Activated CD4-positive, alpha-beta T cell treated with anti-CD3 and anti-CD28 coated beads for 36 hours (primary cell): ENCODE measurements at regions of chr16 and their contacts with region 1.

Region 1: GRCh38 chr16:5033256-5034169 is at the start of gene NAGPA:
- DNase-seq: peak; percentile 93
- ATAC-seq: peak; percentile 96
- H3K4me3 Mint-ChIP-seq: peak within 1 kb of the TSS; percentile 85
- H3K27ac Mint-ChIP-seq: peak within 1 kb of the TSS; percentile 80
- H3K4me1 Mint-ChIP-seq: peaks cover 19% of the 10 kb centered on the region
- H3K27me3 Mint-ChIP-seq: no peaks in the 10 kb centered on the region
- total RNA-seq, gene NAGPA: 8.9 to 10.2 TPM

Region 2: DNA sequence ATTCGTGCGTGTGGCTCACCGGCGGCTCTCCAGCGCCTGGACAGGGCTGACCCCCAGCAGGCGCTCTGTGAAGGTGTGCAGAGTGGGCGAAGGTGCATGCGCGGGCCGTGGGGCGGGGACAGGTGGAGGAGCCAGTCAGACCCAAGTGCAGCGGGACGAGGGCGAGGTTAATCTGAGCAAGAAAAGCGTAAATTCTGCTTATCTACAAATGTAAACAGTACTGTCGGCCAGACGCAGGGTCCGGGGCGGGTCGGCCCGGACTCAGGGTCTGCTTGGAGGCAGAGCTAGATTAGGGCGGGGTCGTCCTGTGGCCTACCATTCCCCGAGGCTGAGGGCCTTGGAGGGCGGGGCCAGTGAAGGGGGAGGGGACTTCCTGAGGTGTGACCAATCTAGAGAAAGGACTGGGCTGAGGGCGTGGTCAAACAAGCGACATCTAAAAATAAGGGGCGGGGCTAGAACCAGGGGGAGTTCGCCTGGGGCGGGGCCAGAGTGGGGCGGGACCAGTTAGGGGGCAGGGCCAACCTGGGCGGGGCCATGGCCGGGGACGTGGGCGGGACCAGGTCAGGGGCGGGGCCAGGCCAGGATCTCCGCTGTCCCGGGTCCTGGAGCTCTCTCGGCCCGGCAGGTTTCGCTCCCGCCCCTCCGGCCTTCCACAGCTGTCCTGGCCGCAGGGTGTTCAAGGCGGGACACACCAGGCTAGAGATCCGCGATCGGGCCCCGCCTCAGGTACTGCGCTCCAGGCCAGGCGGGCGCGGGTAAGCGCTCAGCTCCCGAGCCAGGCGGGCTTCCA is 75.6 kb before region 1 on chr16 and contains the start of gene SEC14L5:
- CTCF ChIA-PET with region 1: interaction called, 3 read pairs
- POLR2A ChIA-PET with region 1: no interaction called
- intact Hi-C with region 1: loop called in 1 of 2 experiments (anchors 1 kb)
- DNase-seq: peak; percentile 98
- ATAC-seq: peak; percentile 95
- H3K4me3 Mint-ChIP-seq: peak within 1 kb of the TSS; percentile 75
- H3K27ac Mint-ChIP-seq: peak within 1 kb of the TSS; percentile 1
- H3K4me1 Mint-ChIP-seq: peaks cover 12% of the 10 kb centered on the region
- H3K27me3 Mint-ChIP-seq: peaks cover 33% of the 10 kb centered on the region
- total RNA-seq, gene SEC14L5: 0.09 to 0.28 TPM

Region 3: DNA sequence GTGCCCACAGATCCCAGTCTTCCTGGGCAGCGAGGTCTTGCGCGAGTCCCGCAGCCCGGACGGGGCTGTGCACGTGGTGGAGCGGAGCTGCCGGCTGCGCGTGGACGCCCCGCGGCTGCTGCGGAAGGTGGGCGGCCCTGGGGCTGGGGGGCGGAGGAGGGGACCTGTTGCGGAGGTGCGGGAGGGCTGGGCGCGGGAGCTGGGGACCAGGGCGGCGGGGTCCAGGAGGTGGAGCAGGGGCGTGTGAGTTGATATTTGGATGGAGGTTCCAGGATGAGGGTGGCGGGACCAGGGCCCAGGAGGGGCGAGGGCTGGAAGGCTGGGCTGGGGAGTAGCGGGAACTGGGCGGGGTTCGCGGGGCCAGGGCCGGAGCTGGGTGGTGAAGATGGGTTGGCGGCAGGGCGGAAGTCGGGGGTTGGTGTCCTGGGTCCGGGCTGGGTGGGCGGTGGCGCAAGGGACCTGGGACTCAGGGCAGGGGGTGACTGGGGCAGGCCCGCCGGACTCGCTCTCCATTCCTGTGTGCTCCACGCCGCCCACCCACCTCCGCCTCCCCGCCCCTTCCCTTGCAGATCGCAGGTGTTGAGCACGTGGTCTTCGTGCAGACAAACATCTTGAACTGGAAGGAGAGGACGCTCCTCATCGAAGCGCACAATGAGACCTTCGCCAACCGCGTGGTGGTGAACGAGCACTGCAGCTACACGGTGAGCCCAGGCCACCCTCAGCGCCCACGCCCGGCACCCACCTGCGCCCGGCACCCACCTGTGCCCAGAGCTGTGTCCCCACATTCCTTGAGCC is 45.7 kb before region 1 on chr16:
- CTCF ChIA-PET with region 1: no interaction called
- POLR2A ChIA-PET with region 1: no interaction called
- intact Hi-C with region 1: no loop called
- DNase-seq: peak; percentile 9
- ATAC-seq: no peak
- H3K4me3 Mint-ChIP-seq: no peak overlapping the region
- H3K27ac Mint-ChIP-seq: no peak overlapping the region
- H3K4me1 Mint-ChIP-seq: peaks cover 2% of the 10 kb centered on the region
- H3K27me3 Mint-ChIP-seq: peaks cover 38% of the 10 kb centered on the region

Region 4: GRCh38 chr16:5071681-5072333 is 38.3 kb after region 1 on chr16 and contains the start of gene ALG1:
- CTCF ChIA-PET with region 1: interaction called, 3 read pairs
- POLR2A ChIA-PET with region 1: no interaction called
- intact Hi-C with region 1: loop called (anchors 1 to 2 kb)
- DNase-seq: peak; percentile 94
- ATAC-seq: peak; percentile 97
- H3K4me3 Mint-ChIP-seq: peak within 1 kb of the TSS; percentile 90
- H3K27ac Mint-ChIP-seq: peak within 1 kb of the TSS; percentile 90
- H3K4me1 Mint-ChIP-seq: peaks cover 21% of the 10 kb centered on the region
- H3K27me3 Mint-ChIP-seq: no peaks in the 10 kb centered on the region
- total RNA-seq, gene ALG1: 15.7 to 18.1 TPM

Region 5: GRCh38 chr16:5738592-5738991 is 705.1 kb after region 1 on chr16:
- CTCF ChIA-PET with region 1: no interaction called
- POLR2A ChIA-PET with region 1: no interaction called
- intact Hi-C with region 1: no loop called
- DNase-seq: no peak
- ATAC-seq: no peak
- H3K4me3 Mint-ChIP-seq: no peak overlapping the region
- H3K27ac Mint-ChIP-seq: no peak overlapping the region
- H3K4me1 Mint-ChIP-seq: no peaks in the 10 kb centered on the region
- H3K27me3 Mint-ChIP-seq: no peaks in the 10 kb centered on the region